K562 (cell line): ENCODE measurements at regions of chr22 and their contacts with region 1.

Region 1: GRCh38 chr22:47837703-47838102 is 1075.3 kb downstream of the TBC1D22A start:
- DNase-seq: peak; percentile 26 to 59 (median 34)
- ATAC-seq: peak; percentile 77
- H3K4me3 ChIP-seq: no peak overlapping the region
- H3K27ac ChIP-seq: no peak overlapping the region
- H3K4me1 ChIP-seq: no peaks in the 10 kb centered on the region
- H3K27me3 ChIP-seq: no peaks in the 10 kb centered on the region
- CTCF ChIP-seq: peak; percentile 60 to 72 (median 64)
- EP300 ChIP-seq: no peak
- POLR2A ChIP-seq: no peak
- RAD21 ChIP-seq: peak; percentile 48 to 78

Region 2: DNA sequence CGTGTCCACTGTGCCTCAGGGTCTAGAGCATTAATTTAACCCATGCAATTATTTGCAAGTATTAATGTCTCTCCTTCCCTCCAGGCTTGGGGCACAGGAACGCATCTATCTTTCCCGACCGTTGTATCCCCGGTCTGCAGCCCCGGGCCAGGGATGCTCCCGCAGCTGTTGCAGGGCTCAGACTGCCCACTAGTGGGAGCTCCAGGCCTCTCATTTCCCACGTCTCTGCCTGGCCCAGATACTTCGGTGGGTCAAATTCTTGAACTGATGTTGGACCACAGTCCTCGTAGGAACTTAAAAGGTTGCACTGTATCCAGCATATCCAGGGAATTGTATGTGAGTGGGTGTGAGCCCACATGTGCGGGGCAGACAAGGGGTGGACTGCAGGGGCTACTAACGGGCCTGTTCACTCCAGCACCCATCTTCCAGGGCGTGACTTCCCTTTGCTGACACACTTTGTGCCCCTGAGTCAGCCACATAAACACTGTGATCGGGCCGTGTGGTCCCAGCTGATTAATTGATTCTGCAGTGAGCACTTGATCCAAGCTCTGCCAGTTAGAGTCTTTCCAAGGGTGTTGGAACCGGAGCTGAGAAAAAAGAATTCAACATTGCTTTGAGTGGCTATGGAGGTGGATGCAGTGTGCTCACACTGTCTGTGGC is 624.0 kb before region 1 on chr22:
- CTCF ChIA-PET with region 1: no interaction called
- POLR2A ChIA-PET with region 1: no interaction called
- in situ Hi-C with region 1: no loop called
- intact Hi-C with region 1: loop called (anchors 10 kb)
- DNase-seq: peak; percentile 39 to 62 (median 56)
- ATAC-seq: peak; percentile 83
- H3K4me3 ChIP-seq: no peak overlapping the region
- H3K27ac ChIP-seq: no peak overlapping the region
- H3K4me1 ChIP-seq: no peaks in the 10 kb centered on the region; a peak in 1 of 5 replicates
- H3K27me3 ChIP-seq: peaks cover 0 to 5% of the 10 kb centered on the region in 2 experiments; a peak in 1 of 5 replicates
- CTCF ChIP-seq: peak; percentile 68 to 80 (median 71)
- EP300 ChIP-seq: no peak
- POLR2A ChIP-seq: no peak
- RAD21 ChIP-seq: peak; percentile 34 to 64; a peak in 3 of 4 replicates

Region 3: GRCh38 chr22:47724030-47724429 is 113.7 kb before region 1 on chr22:
- CTCF ChIA-PET with region 1: no interaction called
- POLR2A ChIA-PET with region 1: no interaction called
- in situ Hi-C with region 1: no loop called
- intact Hi-C with region 1: no loop called
- DNase-seq: no peak
- ATAC-seq: no peak
- H3K4me3 ChIP-seq: no peak overlapping the region
- H3K27ac ChIP-seq: no peak overlapping the region
- H3K4me1 ChIP-seq: no peaks in the 10 kb centered on the region
- H3K27me3 ChIP-seq: no peaks in the 10 kb centered on the region
- CTCF ChIP-seq: no peak
- EP300 ChIP-seq: no peak
- POLR2A ChIP-seq: no peak
- RAD21 ChIP-seq: no peak